ENCODE measurements at regions of chr3 and their contacts with region 1.

Region 1: DNA sequence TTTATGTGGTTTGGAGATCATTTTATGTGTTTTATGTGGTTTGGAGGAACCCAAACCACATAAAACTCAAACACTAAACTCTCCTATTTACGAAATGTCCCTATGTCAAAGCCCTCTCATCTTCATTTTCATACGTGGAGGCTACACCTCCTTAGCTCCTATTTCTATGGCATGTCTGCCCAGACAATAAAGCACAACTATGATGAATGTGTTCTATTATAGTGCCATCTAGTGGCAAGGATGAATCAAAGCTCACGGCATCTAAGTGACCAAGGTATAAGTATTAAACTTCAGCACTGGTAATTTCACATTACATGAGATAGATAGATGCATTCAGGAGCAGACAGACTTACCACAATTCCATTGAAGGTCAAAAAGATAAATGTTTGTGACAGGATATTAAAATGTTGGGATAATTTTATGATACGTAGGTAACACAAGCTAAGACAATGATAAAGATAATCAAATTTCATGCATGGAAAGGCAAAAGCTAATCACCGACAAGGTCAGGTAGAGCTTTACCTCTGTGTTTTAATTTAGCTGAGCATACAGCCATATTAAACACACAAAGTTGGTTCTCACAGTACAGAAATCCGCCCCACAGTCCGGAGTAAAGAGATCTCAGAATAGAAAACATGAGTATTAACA is 130.6 kb upstream of the FHIT start:
- DNase-seq: peak; percentile 33
- H3K4me3 ChIP-seq: no peak overlapping the region
- H3K27ac ChIP-seq: no peak overlapping the region
- H3K4me1 ChIP-seq: peaks cover 3% of the 10 kb centered on the region
- H3K27me3 ChIP-seq: no peaks in the 10 kb centered on the region
- CTCF ChIP-seq: peak; percentile 31 to 38
- POLR2A ChIP-seq: no peak

Region 2: DNA sequence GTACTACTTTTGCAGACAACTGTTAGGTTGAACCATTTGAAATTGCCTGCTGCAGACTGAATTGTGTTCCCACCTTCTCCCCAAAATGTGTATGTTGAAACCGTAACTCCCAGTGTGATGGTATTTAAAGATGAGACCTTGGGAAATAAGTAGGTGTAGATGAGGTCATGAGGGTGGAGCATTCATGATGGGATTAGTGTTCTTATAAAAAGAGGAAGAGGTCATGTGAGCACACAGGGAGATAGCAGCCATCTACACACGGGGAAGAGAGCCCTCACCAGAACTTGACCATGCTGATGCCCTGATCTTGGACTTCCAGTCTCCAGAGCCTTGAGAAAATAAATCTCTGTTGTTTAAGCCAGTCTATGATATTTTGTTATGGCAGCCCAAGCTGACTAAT is 113.2 kb before region 1 on chr3:
- CTCF ChIA-PET with region 1: no interaction called
- POLR2A ChIA-PET with region 1: no interaction called
- dilution Hi-C with region 1: no loop called
- intact Hi-C with region 1: no loop called
- DNase-seq: no peak
- H3K4me3 ChIP-seq: no peak overlapping the region
- H3K27ac ChIP-seq: no peak overlapping the region
- H3K4me1 ChIP-seq: no peaks in the 10 kb centered on the region
- H3K27me3 ChIP-seq: no peaks in the 10 kb centered on the region
- CTCF ChIP-seq: no peak
- POLR2A ChIP-seq: no peak

Region 3: DNA sequence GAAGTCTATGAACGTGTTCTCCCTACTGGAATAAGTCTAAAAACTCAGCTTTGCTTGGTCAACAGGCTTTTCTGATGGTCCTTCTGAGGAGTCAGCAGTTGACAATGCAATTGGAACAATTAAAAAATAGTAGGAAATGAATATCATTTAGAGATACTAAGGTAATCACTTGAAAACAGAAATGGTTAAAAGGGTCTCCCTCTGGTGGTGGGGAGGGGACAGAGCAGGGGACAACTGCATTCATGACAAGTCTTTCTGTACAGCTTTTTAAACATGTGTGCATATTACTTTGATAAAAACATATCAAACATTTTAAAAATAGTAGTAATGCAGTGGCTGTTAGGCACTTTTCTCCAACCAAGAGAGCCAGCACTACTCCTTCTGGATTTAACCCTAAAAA is 10.7 kb before region 1 on chr3:
- CTCF ChIA-PET with region 1: interaction called, 12 read pairs
- POLR2A ChIA-PET with region 1: no interaction called
- dilution Hi-C with region 1: no loop called
- intact Hi-C with region 1: no loop called
- DNase-seq: peak; percentile 32
- H3K4me3 ChIP-seq: no peak overlapping the region
- H3K27ac ChIP-seq: no peak overlapping the region
- H3K4me1 ChIP-seq: no peaks in the 10 kb centered on the region
- H3K27me3 ChIP-seq: no peaks in the 10 kb centered on the region
- CTCF ChIP-seq: peak; percentile 40 to 65
- POLR2A ChIP-seq: no peak